OCI-LY7 (cell line): ENCODE measurements at regions of chrX and their contacts with region 1.

Region 1: GRCh38 chrX:122363112-122363984 is 820.7 kb upstream of the GRIA3 start:
- DNase-seq: no peak
- H3K4me3 ChIP-seq: no peak overlapping the region
- H3K27ac ChIP-seq: no peak overlapping the region
- H3K4me1 ChIP-seq: no peaks in the 10 kb centered on the region
- CTCF ChIP-seq: no peak

Region 2: DNA sequence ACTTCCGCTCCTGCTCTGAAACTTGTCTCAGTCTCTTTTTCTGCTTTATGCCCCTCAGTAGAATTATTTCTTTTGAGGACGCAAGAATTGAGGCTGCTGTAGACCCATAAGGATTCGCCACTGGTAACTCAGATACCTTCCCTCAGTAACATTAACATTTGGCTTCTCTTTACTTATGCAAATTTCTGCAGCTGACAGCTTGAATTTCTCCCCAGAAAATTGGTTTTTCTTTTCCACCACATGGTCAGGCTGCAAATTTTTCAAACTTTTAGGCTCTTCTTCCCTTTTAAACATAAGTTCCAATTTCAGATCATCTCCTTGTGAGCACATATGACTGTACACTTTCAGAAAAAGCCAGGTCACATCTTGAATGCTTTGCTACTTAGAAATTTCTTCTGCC is 18.5 kb before region 1 on chrX:
- CTCF ChIA-PET with region 1: no interaction called
- POLR2A ChIA-PET with region 1: no interaction called
- intact Hi-C with region 1: loop called (anchors 1 kb)
- DNase-seq: no peak
- H3K4me3 ChIP-seq: no peak overlapping the region
- H3K27ac ChIP-seq: no peak overlapping the region
- H3K4me1 ChIP-seq: no peaks in the 10 kb centered on the region
- CTCF ChIP-seq: no peak

Region 3: DNA sequence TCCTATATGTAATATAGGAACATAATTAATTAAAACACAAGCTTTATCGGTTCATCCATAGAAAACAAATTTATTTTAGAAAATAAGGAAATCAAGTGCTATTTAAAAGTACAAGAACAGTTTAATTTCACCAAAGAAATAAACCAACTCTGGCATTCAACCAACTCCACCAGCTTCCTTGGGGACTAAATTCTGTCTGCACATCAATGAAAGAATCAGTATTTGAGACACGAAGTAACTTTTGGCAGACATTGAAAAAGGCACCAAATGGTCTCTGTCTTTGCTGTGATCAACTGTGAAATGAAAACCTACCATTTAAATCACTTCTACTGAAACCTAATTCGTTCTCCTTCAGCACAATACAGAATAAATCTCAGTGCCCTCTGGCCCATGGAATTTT is 101.0 kb after region 1 on chrX:
- CTCF ChIA-PET with region 1: no interaction called
- POLR2A ChIA-PET with region 1: no interaction called
- intact Hi-C with region 1: no loop called
- DNase-seq: no peak
- H3K4me3 ChIP-seq: no peak overlapping the region
- H3K27ac ChIP-seq: no peak overlapping the region
- H3K4me1 ChIP-seq: no peaks in the 10 kb centered on the region
- CTCF ChIP-seq: no peak